Posterior vena cava (tissue), 2 donors: ENCODE measurements at regions of chr2 and their contacts with region 1.

Region 1: GRCh38 chr2:200483729-200484198 is 26.1 kb downstream of the KCTD18 start:
- DNase-seq: no peak

Region 2: GRCh38 chr2:199979832-199980628 is 503.7 kb before region 1 on chr2:
- intact Hi-C with region 1: loop called (anchors 5 kb)
- DNase-seq: peak; percentile 95